B cell (primary cell): ENCODE measurements at regions of chr7 and their contacts with region 1.

Region 1: DNA sequence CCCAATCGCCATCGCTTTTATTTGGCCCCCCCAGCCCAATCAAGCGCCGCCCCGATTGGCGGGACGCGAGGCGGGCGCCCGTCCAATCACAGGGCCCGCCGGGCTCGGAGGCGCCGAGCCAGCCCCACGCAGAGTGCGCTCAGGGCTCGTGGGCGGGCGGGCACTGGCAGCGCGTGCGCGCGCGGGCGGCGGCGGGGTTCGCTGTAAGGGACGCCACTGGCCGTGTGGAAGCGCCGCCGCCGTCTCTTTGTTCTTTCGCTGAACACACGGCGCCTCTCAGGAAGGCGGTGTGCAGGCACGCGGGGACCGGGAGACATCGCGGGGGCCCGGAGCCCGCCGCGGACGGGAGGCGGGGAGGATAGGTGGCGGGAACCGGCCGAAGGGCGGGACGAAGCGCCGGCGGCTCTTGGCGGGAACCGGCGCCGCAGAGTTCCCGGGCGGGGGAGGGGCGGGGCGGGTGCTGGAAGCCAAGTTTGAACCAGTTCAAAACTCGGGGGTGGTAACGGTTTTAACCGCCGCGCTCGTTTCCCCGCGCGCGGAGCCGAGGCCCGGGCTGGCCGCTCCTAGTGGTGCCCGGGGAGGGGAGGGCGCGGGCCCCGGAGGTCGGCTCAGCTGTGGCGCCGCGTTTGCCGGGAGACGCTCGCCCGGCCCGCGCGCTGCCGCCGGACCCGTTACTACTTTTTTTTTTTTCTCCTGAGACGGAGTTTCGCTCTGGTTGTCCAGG is 370 bp upstream of the EZH2 start:
- DNase-seq: peak; percentile 96
- ATAC-seq: peak; percentile 93
- H3K4me3 ChIP-seq: peak overlapping the region; percentile 17 to 81 (median 64)
- H3K4me3 Mint-ChIP-seq: peak overlapping the region; percentile 91
- H3K27ac ChIP-seq: peak overlapping the region; percentile 75 to 99
- H3K27ac Mint-ChIP-seq: peak overlapping the region; percentile 93
- H3K4me1 ChIP-seq: peaks cover 11 to 16% of the 10 kb centered on the region in 2 donors
- H3K4me1 Mint-ChIP-seq: peaks cover 14% of the 10 kb centered on the region
- H3K27me3 ChIP-seq: no peaks in the 10 kb centered on the region
- H3K27me3 Mint-ChIP-seq: no peaks in the 10 kb centered on the region
- CTCF ChIP-seq: no peak

Region 2: DNA sequence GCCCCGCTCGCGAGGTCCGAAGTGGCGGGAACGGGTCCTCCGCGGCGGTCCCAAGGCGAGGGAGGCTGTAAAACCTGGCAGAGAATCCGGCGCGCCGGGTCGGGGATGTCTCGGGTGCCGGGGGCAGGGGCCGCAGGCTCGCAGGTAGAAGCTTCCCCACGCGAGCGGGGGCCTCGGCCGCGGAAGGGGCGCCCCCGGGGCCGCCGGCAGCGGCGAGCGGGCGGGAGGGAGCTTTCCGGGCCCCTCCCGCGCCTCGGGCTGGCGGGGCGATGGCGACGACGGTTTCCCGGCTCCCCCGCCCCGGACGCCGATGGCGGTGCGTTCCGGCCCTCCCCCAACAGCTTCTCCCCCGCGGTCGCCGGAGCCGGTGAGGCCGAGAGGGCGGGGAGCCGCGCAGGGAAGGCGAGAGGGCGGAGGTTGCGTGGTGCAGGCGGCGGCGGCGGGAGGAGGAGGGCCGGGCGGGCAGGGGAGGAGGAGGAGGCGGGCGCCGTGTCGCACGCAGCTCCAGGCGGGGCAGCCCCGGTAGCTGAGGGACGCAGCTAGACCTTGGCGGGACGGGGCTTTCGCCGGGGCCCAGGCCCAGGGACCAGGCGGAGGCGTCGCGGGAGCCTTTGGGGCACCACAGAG is 186.0 kb before region 1 on chr7 and contains the start of gene CUL1:
- CTCF ChIA-PET with region 1: no interaction called
- POLR2A ChIA-PET with region 1: interaction called, 7 read pairs
- intact Hi-C with region 1: loop called (anchors 1 kb)
- DNase-seq: peak; percentile 90
- ATAC-seq: peak; percentile 81
- H3K4me3 ChIP-seq: peak within 1 kb of the TSS; percentile 76 to 93 (median 84)
- H3K4me3 Mint-ChIP-seq: peak within 1 kb of the TSS; percentile 91
- H3K27ac ChIP-seq: peak within 1 kb of the TSS; percentile 69 to 91
- H3K27ac Mint-ChIP-seq: peak within 1 kb of the TSS; percentile 92
- H3K4me1 ChIP-seq: peaks cover 30 to 31% of the 10 kb centered on the region in 2 donors
- H3K4me1 Mint-ChIP-seq: peaks cover 46% of the 10 kb centered on the region
- H3K27me3 ChIP-seq: no peaks in the 10 kb centered on the region
- H3K27me3 Mint-ChIP-seq: no peaks in the 10 kb centered on the region
- CTCF ChIP-seq: no peak
- total RNA-seq, gene CUL1: 51.1 and 53.5 TPM in 2 replicates

Region 3: GRCh38 chr7:148856891-148857290 is 27.6 kb before region 1 on chr7:
- CTCF ChIA-PET with region 1: interaction called, 4 read pairs
- POLR2A ChIA-PET with region 1: no interaction called
- intact Hi-C with region 1: loop called (anchors 1 kb)
- DNase-seq: no peak
- ATAC-seq: no peak
- H3K4me3 ChIP-seq: no peak overlapping the region
- H3K4me3 Mint-ChIP-seq: no peak overlapping the region
- H3K27ac ChIP-seq: no peak overlapping the region
- H3K27ac Mint-ChIP-seq: no peak overlapping the region
- H3K4me1 ChIP-seq: no peaks in the 10 kb centered on the region
- H3K4me1 Mint-ChIP-seq: peaks cover 12% of the 10 kb centered on the region
- H3K27me3 ChIP-seq: no peaks in the 10 kb centered on the region
- H3K27me3 Mint-ChIP-seq: no peaks in the 10 kb centered on the region
- CTCF ChIP-seq: no peak

Region 4: DNA sequence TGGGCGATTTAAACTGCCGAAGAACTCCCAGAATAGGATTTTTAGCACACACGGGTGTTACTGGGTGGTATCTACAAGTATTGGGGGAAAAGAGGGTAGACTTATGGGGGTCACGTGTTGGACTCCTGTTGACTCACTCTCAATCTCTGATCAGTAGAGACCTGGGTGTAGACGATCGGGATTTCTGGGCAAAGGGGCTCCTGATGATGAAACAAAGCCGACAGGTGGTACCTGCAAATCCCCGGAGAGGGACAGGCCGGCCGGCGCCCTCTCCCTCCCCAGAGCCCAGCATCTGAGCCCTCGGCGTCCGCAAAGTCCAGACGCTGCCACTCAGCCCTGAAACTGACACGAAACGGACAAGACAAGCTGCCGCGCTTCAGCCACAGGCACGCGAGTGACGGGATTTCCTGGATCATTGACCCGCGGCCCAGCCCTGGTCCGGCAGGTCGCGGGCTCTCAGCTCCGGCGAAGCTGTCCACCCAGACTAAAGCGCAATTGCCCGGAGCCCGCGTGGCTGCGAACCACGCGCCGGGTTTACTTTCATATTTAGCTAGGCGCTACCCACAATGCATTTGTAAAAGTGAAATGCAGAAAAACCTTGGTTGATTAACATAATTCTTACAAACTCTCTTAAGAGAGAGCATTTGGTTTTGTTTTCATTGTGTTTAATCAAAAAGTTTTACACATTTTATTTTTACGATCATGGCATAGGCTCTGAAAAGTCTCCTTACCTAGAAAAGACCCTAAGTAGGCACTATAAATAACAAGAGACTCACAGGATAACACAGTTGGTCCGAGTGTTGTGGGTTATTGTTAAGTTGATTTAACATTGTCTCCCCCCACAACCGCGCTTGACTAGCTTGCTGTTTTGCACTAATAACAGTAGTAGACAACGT is 56.5 kb after region 1 on chr7:
- CTCF ChIA-PET with region 1: interaction called, 4 read pairs
- POLR2A ChIA-PET with region 1: interaction called, 5 read pairs
- intact Hi-C with region 1: loop called (anchors 1 kb)
- DNase-seq: peak; percentile 91
- ATAC-seq: peak; percentile 80
- H3K4me3 ChIP-seq: peak overlapping the region; percentile 85 to 98 (median 89)
- H3K4me3 Mint-ChIP-seq: peak overlapping the region; percentile 95
- H3K27ac ChIP-seq: peak overlapping the region; percentile 77 to 88
- H3K27ac Mint-ChIP-seq: peak overlapping the region; percentile 97
- H3K4me1 ChIP-seq: peaks cover 6 to 12% of the 10 kb centered on the region in 2 donors
- H3K4me1 Mint-ChIP-seq: peaks cover 13% of the 10 kb centered on the region
- H3K27me3 ChIP-seq: no peaks in the 10 kb centered on the region
- H3K27me3 Mint-ChIP-seq: no peaks in the 10 kb centered on the region
- CTCF ChIP-seq: no peak

Region 5: GRCh38 chr7:149125863-149126661 is 241.6 kb after region 1 on chr7 and contains the start of gene ZNF425:
- CTCF ChIA-PET with region 1: no interaction called
- POLR2A ChIA-PET with region 1: no interaction called
- intact Hi-C with region 1: loop called (anchors 2 kb)
- DNase-seq: peak; percentile 95
- ATAC-seq: peak; percentile 84
- H3K4me3 ChIP-seq: peak within 1 kb of the TSS; percentile 64 to 98 (median 88)
- H3K4me3 Mint-ChIP-seq: peak within 1 kb of the TSS; percentile 97
- H3K27ac ChIP-seq: peak within 1 kb of the TSS; percentile 85 to 89
- H3K27ac Mint-ChIP-seq: peak within 1 kb of the TSS; percentile 99
- H3K4me1 ChIP-seq: peaks cover 12 to 14% of the 10 kb centered on the region in 2 donors
- H3K4me1 Mint-ChIP-seq: peaks cover 22% of the 10 kb centered on the region
- H3K27me3 ChIP-seq: no peaks in the 10 kb centered on the region
- H3K27me3 Mint-ChIP-seq: no peaks in the 10 kb centered on the region
- CTCF ChIP-seq: peak; percentile 89
- total RNA-seq, gene ZNF425: 2.8 and 3.3 TPM in 2 replicates

Region 6: GRCh38 chr7:149261829-149262617 is 377.6 kb after region 1 on chr7 and contains the start of gene ZNF783:
- CTCF ChIA-PET with region 1: no interaction called
- POLR2A ChIA-PET with region 1: no interaction called
- intact Hi-C with region 1: loop called (anchors 5 kb)
- DNase-seq: peak; percentile 94
- ATAC-seq: peak; percentile 93
- H3K4me3 ChIP-seq: peak within 1 kb of the TSS in 4 of 5 experiments; percentile 64 to 75 (median 68)
- H3K4me3 Mint-ChIP-seq: peak within 1 kb of the TSS; percentile 94
- H3K27ac ChIP-seq: peak within 1 kb of the TSS; percentile 69 to 76
- H3K27ac Mint-ChIP-seq: peak within 1 kb of the TSS; percentile 92
- H3K4me1 ChIP-seq: peaks cover 13 to 17% of the 10 kb centered on the region in 2 donors
- H3K4me1 Mint-ChIP-seq: peaks cover 21% of the 10 kb centered on the region
- H3K27me3 ChIP-seq: no peaks in the 10 kb centered on the region
- H3K27me3 Mint-ChIP-seq: no peaks in the 10 kb centered on the region
- CTCF ChIP-seq: peak; percentile 86
- total RNA-seq, gene ZNF783: 43.8 and 44.8 TPM in 2 replicates